Esophagus squamous epithelium (tissue), 5 donors: ENCODE measurements at regions of chr1 and their contacts with region 1.

Region 1: GRCh38 chr1:59699227-59699847 is 115.4 kb upstream of the HOOK1 start:
- DNase-seq: no peak
- H3K4me3 ChIP-seq: no peak overlapping the region
- H3K27ac ChIP-seq: peak overlapping the region in 1 of 4 donors; percentile 23
- H3K4me1 ChIP-seq: peaks cover 0 to 41% (median 12%) of the 10 kb centered on the region in 3 donors
- H3K27me3 ChIP-seq: no peaks in the 10 kb centered on the region
- CTCF ChIP-seq: peak; percentile 87 to 97 (median 95)
- POLR2A ChIP-seq: no peak

Region 2: GRCh38 chr1:59296358-59297256 is 402.7 kb before region 1 on chr1 and contains the start of gene FGGY:
- intact Hi-C with region 1: loop called (anchors 10 kb)
- DNase-seq: peak; percentile 81
- H3K4me3 ChIP-seq: peak within 1 kb of the TSS; percentile 40 to 74 (median 52)
- H3K27ac ChIP-seq: peak within 1 kb of the TSS; percentile 89 to 98 (median 91)
- H3K4me1 ChIP-seq: peaks cover 0 to 52% (median 10%) of the 10 kb centered on the region in 3 donors
- H3K27me3 ChIP-seq: no peaks in the 10 kb centered on the region
- CTCF ChIP-seq: peak in 3 of 6 experiments; percentile 5 to 11 (median 10)
- POLR2A ChIP-seq: peak in 3 of 4 donors; percentile 51 to 90 (median 81)
- total RNA-seq, gene FGGY: 6.0 to 18.1 (median 9.3) TPM

Region 3: DNA sequence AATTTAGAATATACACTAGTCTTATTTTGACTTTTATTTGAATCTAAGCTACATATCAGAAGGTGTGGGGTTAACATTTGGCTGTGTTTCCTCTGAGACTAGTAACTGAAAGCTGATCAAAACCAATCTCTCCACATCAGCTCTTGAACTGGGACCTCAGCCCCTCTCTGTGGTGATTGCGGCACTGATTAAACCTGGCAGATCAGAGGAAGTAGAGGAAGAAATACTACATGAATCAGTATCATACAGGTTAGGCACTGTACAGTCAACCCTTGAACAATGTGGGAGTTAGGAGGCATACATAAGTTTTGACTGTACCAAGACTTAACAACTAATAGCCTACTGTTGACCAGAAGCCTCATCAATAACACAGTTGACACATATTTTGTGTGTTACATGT is 496.7 kb after region 1 on chr1:
- intact Hi-C with region 1: no loop called
- DNase-seq: no peak
- H3K4me3 ChIP-seq: no peak overlapping the region
- H3K27ac ChIP-seq: no peak overlapping the region
- H3K4me1 ChIP-seq: no peaks in the 10 kb centered on the region
- H3K27me3 ChIP-seq: no peaks in the 10 kb centered on the region
- CTCF ChIP-seq: no peak
- POLR2A ChIP-seq: no peak